ENCODE measurements at regions of chr13 and their contacts with region 1.

Region 1: GRCh38 chr13:27712421-27712820 is 79.9 kb upstream of the GSX1 start:
- DNase-seq: no peak
- H3K4me3 ChIP-seq: no peak overlapping the region
- H3K27ac ChIP-seq: no peak overlapping the region
- H3K4me1 ChIP-seq: no peaks in the 10 kb centered on the region
- H3K27me3 ChIP-seq: peaks cover 0 to 19% (median 0%) of the 10 kb centered on the region in 7 donors
- CTCF ChIP-seq: peak in 5 of 11 experiments; percentile 10 to 51 (median 34)
- POLR2A ChIP-seq: no peak

Region 2: DNA sequence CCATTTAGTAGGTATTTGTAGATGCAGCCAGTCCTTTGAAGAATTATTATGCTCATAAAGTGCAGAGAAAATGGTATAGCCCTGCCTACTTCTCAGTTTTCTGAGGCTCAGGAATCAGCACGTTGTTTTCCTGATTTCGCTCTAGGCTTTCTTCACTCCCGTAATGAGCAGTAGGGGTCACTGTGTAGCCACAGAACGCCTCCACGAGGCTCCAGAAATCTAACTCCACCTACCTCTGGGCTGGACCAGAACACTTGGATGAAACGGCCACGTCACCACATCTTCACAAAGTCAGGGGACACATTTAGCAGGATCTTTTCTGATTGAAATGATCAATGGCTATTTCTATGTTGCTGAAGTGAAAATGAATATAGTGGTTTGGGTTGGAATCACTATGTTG is 337.8 kb before region 1 on chr13:
- intact Hi-C with region 1: loop called (anchors 10 kb)
- DNase-seq: no peak
- H3K4me3 ChIP-seq: no peak overlapping the region
- H3K27ac ChIP-seq: no peak overlapping the region
- H3K4me1 ChIP-seq: peaks cover 0 to 15% (median 8%) of the 10 kb centered on the region in 6 donors
- H3K27me3 ChIP-seq: peaks cover 0 to 47% (median 0%) of the 10 kb centered on the region in 7 donors
- CTCF ChIP-seq: peak; percentile 30 to 80 (median 71)
- POLR2A ChIP-seq: no peak